ENCODE measurements at regions of chr3 and their contacts with region 1.

Region 1: DNA sequence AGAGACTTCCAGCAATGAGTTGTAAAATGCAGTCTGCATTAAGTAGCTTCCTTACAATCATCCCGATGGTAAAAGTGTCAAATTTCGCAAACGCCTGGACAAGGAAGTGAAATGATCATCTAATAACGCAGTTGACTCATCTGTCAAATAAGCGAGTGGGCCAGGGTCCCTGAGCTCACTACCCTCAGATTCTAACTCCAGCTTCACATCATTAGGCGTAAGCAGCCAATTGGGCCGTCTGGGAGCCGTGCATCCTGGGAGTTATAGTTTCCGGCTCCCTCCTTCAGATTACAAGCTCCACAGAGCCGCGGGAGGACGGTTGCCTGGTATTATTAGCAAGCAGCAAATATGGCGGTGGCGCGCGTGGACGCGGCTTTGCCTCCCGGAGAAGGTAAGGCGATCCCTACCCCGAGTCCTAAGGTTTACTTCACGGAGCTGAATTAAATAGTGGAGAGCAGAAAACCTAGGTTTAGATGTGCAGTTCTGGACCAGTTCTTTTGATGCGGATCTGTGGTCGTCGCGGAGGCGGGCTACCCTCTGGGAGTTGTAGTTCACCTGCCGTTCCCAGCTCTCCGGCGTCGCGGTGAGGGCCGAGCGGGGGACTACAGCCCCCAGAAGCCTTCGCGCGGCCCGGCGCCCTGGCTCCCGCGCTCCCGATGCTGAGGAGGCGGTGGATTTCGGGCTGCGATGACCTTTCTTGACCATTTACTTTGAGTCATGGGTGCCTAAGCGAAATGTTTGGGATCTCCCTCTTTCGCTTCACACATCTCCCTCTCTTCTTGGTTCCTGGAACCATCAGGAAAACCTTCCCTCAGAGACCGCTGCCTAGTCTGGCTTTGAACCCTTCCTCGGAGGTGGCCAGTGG is at the start of gene CEP97:
- DNase-seq: peak; percentile 75 to 92 (median 80)
- ATAC-seq: peak; percentile 94
- H3K4me3 ChIP-seq: peak within 1 kb of the TSS; percentile 99
- H3K4me3 Mint-ChIP-seq: peak within 1 kb of the TSS; percentile 97
- H3K27ac ChIP-seq: peak within 1 kb of the TSS; percentile 75 to 81
- H3K27ac Mint-ChIP-seq: peak within 1 kb of the TSS; percentile 89
- H3K4me1 ChIP-seq: peaks cover 42% of the 10 kb centered on the region
- H3K4me1 Mint-ChIP-seq: peaks cover 46% of the 10 kb centered on the region
- H3K27me3 ChIP-seq: no peaks in the 10 kb centered on the region
- H3K27me3 Mint-ChIP-seq: no peaks in the 10 kb centered on the region
- CTCF ChIP-seq: no peak
- total RNA-seq, gene CEP97: 6.3 to 6.6 TPM

Region 2: GRCh38 chr3:101676765-101677435 is 47.7 kb before region 1 on chr3 and contains the start of gene ZBTB11:
- CTCF ChIA-PET with region 1: interaction called, 6 read pairs
- POLR2A ChIA-PET with region 1: interaction called, 34 read pairs
- intact Hi-C with region 1: loop called in 1 of 2 experiments (anchors 5 kb)
- DNase-seq: peak; percentile 99 to 100 (median 100)
- ATAC-seq: peak; percentile 67
- H3K4me3 ChIP-seq: peak within 1 kb of the TSS; percentile 71
- H3K4me3 Mint-ChIP-seq: peak within 1 kb of the TSS; percentile 98
- H3K27ac ChIP-seq: peak within 1 kb of the TSS; percentile 97 to 99
- H3K27ac Mint-ChIP-seq: peak within 1 kb of the TSS; percentile 100
- H3K4me1 ChIP-seq: peaks cover 36% of the 10 kb centered on the region
- H3K4me1 Mint-ChIP-seq: peaks cover 60% of the 10 kb centered on the region
- H3K27me3 ChIP-seq: no peaks in the 10 kb centered on the region
- H3K27me3 Mint-ChIP-seq: peaks cover 3% of the 10 kb centered on the region
- CTCF ChIP-seq: no peak
- total RNA-seq, gene ZBTB11: 73.5 to 76.6 TPM

Region 3: GRCh38 chr3:101685870-101686412 is 38.6 kb before region 1 on chr3:
- CTCF ChIA-PET with region 1: no interaction called
- POLR2A ChIA-PET with region 1: interaction called, 41 read pairs
- intact Hi-C with region 1: loop called in 1 of 2 experiments (anchors 5 kb)
- DNase-seq: peak in 4 of 14 experiments; percentile 7 to 40 (median 26)
- ATAC-seq: peak; percentile 5
- H3K4me3 ChIP-seq: peak overlapping the region; percentile 91
- H3K4me3 Mint-ChIP-seq: peak overlapping the region; percentile 99
- H3K27ac ChIP-seq: peak overlapping the region; percentile 87 to 94
- H3K27ac Mint-ChIP-seq: peak overlapping the region; percentile 99
- H3K4me1 ChIP-seq: peaks cover 30% of the 10 kb centered on the region
- H3K4me1 Mint-ChIP-seq: peaks cover 49% of the 10 kb centered on the region
- H3K27me3 ChIP-seq: no peaks in the 10 kb centered on the region
- H3K27me3 Mint-ChIP-seq: no peaks in the 10 kb centered on the region
- CTCF ChIP-seq: no peak

Region 4: DNA sequence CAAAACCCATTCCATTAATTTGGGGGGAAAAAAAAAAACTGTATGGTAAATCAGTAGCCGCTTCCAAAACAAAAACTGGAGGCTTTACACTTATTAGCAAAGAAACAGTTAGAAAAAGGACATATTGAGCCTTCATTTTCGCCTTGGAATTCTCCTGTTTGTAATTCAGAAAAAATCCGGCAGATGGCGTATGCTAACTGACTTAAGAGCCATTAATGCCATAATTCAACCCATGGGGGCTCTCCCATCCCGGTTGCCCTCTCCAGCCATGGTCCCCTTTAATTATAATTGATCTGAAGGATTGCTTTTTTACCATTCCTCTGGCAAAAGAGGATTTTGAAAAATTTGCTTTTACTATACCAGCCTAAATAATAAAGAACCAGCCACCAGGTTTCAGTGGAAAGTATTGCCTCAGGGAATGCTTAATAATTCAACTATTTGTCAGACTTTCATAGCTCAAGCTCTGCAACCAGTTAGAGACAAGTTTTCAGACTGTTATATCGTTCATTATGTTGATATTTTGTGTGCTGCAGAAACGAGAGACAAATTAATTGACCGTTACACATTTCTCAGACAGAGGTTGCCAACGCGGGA is 28.7 kb before region 1 on chr3:
- CTCF ChIA-PET with region 1: no interaction called
- POLR2A ChIA-PET with region 1: no interaction called
- intact Hi-C with region 1: loop called in 1 of 2 experiments (anchors 2 kb)
- DNase-seq: peak in 5 of 14 experiments; percentile 34 to 80 (median 72)
- ATAC-seq: no peak
- H3K4me3 ChIP-seq: no peak overlapping the region
- H3K4me3 Mint-ChIP-seq: no peak overlapping the region
- H3K27ac ChIP-seq: no peak overlapping the region
- H3K27ac Mint-ChIP-seq: no peak overlapping the region
- H3K4me1 ChIP-seq: no peaks in the 10 kb centered on the region
- H3K4me1 Mint-ChIP-seq: no peaks in the 10 kb centered on the region
- H3K27me3 ChIP-seq: no peaks in the 10 kb centered on the region
- H3K27me3 Mint-ChIP-seq: no peaks in the 10 kb centered on the region
- CTCF ChIP-seq: peak; percentile 93

Region 5: GRCh38 chr3:101784855-101785613 is 60.5 kb after region 1 on chr3:
- CTCF ChIA-PET with region 1: interaction called, 3 read pairs
- POLR2A ChIA-PET with region 1: interaction called, 51 read pairs
- intact Hi-C with region 1: no loop called
- DNase-seq: peak in 3 of 14 experiments; percentile 52 to 63 (median 54)
- ATAC-seq: peak; percentile 89
- H3K4me3 ChIP-seq: peak overlapping the region; percentile 30
- H3K4me3 Mint-ChIP-seq: peak overlapping the region; percentile 79
- H3K27ac ChIP-seq: peak overlapping the region; percentile 64 to 65
- H3K27ac Mint-ChIP-seq: peak overlapping the region; percentile 92
- H3K4me1 ChIP-seq: peaks cover 32% of the 10 kb centered on the region
- H3K4me1 Mint-ChIP-seq: peaks cover 72% of the 10 kb centered on the region
- H3K27me3 ChIP-seq: no peaks in the 10 kb centered on the region
- H3K27me3 Mint-ChIP-seq: no peaks in the 10 kb centered on the region
- CTCF ChIP-seq: no peak

Region 6: DNA sequence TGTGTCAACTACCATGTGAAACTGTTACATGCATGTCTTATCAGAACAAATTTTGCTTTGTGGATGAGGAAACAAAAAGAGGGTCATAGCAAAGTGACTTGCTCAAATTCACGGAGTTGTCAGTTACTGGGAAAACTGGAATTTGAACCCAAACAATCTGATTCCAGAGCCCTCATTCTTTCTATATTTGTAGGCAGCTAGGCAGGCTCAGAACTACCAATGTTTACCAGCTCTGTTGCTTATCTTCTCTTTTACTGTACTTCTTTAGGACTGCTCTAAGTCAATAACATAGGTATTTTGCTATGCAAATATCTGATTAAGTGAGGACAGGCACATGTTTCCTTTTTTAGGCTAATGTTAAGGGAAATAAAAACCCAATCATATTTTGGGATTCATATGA is 1160.7 kb after region 1 on chr3:
- CTCF ChIA-PET with region 1: no interaction called
- POLR2A ChIA-PET with region 1: no interaction called
- intact Hi-C with region 1: no loop called
- DNase-seq: no peak
- ATAC-seq: no peak
- H3K4me3 ChIP-seq: no peak overlapping the region
- H3K4me3 Mint-ChIP-seq: no peak overlapping the region
- H3K27ac ChIP-seq: no peak overlapping the region
- H3K27ac Mint-ChIP-seq: no peak overlapping the region
- H3K4me1 ChIP-seq: no peaks in the 10 kb centered on the region
- H3K4me1 Mint-ChIP-seq: no peaks in the 10 kb centered on the region
- H3K27me3 ChIP-seq: no peaks in the 10 kb centered on the region
- H3K27me3 Mint-ChIP-seq: no peaks in the 10 kb centered on the region
- CTCF ChIP-seq: no peak